Ascending aorta (tissue), 2 donors: ENCODE measurements at regions of chr2 and their contacts with region 1.

Region 1: DNA sequence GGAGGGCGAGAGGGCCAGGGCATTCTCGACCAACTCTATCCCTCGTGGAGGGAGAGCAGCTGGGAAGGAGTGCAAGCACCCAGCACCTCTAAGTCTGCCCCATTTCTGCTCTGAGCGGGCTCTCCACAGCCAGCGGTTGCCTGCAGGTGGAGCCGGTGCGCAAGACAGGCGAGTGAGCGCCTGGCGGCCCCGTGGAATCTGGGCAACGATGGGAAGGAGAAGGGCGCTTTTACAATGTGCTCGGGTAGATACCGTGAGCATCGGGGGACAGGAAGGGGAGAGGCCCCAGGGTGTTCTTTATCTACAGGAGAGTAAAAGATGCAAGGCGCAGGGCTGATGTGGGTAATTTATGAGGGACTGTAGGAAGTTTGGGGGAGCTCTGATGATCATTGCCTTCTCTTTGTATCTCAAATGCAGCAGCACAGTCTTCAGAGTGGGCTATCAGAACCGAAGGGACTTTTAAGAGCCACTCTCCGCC is 867 bp upstream of the TTL start:
- DNase-seq: peak; percentile 22 to 88
- H3K4me3 ChIP-seq: peak overlapping the region; percentile 81 to 84
- H3K27ac ChIP-seq: peak overlapping the region; percentile 74 to 83
- H3K4me1 ChIP-seq: peaks cover 0 to 19% of the 10 kb centered on the region in 2 donors
- H3K27me3 ChIP-seq: no peaks in the 10 kb centered on the region
- CTCF ChIP-seq: peak; percentile 57 to 91 (median 80)

Region 2: GRCh38 chr2:112004253-112004645 is 476.8 kb before region 1 on chr2:
- intact Hi-C with region 1: no loop called
- DNase-seq: peak; percentile 52 to 78
- H3K4me3 ChIP-seq: no peak overlapping the region
- H3K27ac ChIP-seq: peak overlapping the region in 1 of 2 donors; percentile 2
- H3K4me1 ChIP-seq: no peaks in the 10 kb centered on the region
- H3K27me3 ChIP-seq: no peaks in the 10 kb centered on the region
- CTCF ChIP-seq: no peak

Region 3: DNA sequence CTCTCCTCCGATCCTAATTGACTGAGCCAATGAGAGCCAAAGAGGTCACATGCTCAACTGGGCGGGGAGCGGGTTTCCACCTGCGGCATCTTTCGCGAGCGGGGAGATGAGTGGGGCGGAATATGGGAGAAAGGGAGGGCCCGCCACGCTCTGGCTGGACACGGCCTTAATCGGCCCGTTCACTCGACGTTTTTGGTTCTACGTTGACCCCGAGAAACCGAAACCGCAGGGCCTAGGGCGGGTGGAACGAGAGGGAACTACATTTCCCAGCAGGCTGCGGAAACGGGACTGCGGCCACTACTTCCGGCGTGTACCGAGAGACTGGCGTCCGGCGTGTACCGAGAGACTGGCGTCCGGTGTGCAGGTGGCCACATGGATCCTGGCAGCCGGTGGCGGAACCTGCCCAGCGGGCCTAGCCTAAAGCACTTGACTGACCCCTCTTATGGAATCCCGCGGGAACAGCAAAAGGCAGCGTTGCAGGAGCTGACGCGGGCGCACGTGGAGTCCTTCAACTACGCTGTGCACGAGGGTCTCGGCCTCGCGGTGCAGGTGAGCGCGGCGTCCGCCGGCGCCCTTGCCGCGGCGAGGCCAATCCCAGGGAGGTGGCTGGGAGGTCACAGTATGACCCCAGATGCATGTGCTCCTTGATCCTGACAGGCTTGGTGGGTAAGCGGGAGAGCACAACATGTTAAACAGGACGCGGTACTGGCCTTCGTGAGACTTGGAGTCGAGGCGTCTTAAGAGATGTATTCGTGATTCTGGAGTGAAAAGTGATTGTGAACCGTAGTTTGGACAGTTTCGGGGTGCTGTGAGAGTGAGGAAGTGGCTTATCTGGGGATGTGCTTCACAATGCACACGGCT is 61.3 kb after region 1 on chr2 and contains the start of gene POLR1B:
- intact Hi-C with region 1: loop called (anchors 1 kb)
- DNase-seq: peak; percentile 19 to 90
- H3K4me3 ChIP-seq: peak within 1 kb of the TSS; percentile 86
- H3K27ac ChIP-seq: peak within 1 kb of the TSS; percentile 91 to 93
- H3K4me1 ChIP-seq: peaks cover 3 to 11% of the 10 kb centered on the region in 2 donors
- H3K27me3 ChIP-seq: no peaks in the 10 kb centered on the region
- CTCF ChIP-seq: no peak
- total RNA-seq, gene POLR1B: 3.6 TPM

Region 4: DNA sequence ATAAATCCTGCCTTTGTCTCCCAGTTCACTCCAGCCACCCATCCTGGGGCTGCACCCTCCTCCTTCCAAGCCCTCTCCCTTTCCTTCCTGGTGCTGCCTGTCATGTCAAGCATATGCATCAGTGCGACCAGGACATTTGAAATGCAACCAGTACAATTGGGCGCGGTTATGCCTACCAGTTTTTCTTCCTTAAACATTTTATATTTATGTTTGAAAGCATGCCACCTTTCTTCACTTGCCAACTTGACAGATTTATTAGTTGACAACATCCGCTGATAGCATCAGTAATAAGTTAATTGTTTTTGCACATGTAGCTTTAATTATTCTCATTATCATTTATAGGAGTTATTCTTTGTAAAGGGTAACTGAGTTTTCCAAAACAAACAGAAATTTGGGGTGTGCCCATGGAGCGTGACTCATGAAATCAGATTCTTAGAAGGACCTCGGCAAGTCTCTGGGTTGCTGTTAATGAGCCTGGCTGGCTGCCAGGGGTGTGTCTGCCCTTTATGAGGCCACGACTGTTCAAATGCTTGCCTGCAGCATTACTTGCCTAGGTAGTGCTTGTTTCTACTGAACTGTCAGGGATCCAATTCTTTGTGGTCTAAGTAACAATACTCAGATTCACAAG is 388.3 kb after region 1 on chr2:
- intact Hi-C with region 1: no loop called
- DNase-seq: no peak
- H3K4me3 ChIP-seq: no peak overlapping the region
- H3K27ac ChIP-seq: no peak overlapping the region
- H3K4me1 ChIP-seq: no peaks in the 10 kb centered on the region
- H3K27me3 ChIP-seq: no peaks in the 10 kb centered on the region
- CTCF ChIP-seq: no peak